Activated CD4-positive, alpha-beta T cell treated with anti-CD3 and anti-CD28 coated beads for 36 hours (primary cell): ENCODE measurements at regions of chr12 and their contacts with region 1.

Region 1: DNA sequence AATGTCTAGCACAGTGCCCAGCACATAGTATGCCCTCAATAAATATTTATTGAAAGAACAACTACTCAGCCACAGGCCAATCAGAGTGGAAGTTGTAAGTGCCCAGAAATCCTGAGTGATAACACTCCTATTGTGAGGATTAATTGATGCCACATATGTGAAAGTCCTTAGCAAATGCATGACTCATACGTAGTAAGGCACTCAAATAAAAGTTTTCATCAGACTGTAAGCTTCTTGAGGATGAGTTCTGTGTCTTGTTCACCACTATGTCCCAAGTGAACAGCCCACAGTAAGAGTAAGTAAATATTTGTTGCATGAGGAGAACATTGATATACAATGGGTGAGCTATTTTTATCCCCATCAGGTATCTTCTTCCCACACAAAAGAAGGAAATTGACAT is 24.7 kb upstream of the ANO6 start:
- DNase-seq: no peak
- ATAC-seq: peak; percentile 69
- H3K4me3 Mint-ChIP-seq: no peak overlapping the region
- H3K27ac Mint-ChIP-seq: no peak overlapping the region
- H3K4me1 Mint-ChIP-seq: peaks cover 16% of the 10 kb centered on the region
- H3K27me3 Mint-ChIP-seq: no peaks in the 10 kb centered on the region

Region 2: DNA sequence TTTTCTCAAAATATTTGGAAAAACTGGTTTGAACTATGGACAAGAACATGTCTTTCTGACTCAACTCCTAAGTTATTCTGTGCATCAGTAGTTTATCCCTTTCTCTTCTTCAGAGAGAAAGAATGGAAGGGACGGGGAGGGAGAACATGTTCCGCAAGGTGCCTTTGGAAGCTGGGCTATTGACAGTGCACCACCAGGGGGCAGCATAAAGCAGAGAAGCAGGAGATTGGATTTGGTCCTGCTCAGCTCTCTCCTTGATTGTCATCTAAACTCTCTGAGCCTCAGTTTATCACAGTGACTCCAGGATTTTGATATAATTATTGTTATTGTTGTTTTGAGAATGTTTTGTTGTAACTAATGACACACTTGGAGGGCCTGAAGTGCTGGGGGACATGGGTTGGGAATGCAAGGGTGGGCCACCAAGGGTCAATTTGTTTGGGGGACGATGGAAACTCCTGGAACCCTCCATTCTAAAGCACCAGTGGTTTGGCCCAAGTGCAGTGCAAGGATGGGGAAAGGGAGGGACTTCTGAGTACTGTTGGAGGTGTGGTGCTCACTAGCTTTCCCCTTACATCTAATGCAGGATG is 20.7 kb before region 1 on chr12:
- CTCF ChIA-PET with region 1: interaction called, 10 read pairs
- POLR2A ChIA-PET with region 1: no interaction called
- intact Hi-C with region 1: no loop called
- DNase-seq: peak; percentile 92
- ATAC-seq: no peak
- H3K4me3 Mint-ChIP-seq: no peak overlapping the region
- H3K27ac Mint-ChIP-seq: no peak overlapping the region
- H3K4me1 Mint-ChIP-seq: no peaks in the 10 kb centered on the region
- H3K27me3 Mint-ChIP-seq: no peaks in the 10 kb centered on the region

Region 3: GRCh38 chr12:45215419-45216229 is 24.4 kb after region 1 on chr12 and contains the start of gene ANO6:
- CTCF ChIA-PET with region 1: interaction called, 5 read pairs
- POLR2A ChIA-PET with region 1: no interaction called
- intact Hi-C with region 1: loop called in 1 of 2 experiments (anchors 1 kb)
- DNase-seq: peak; percentile 89
- ATAC-seq: peak; percentile 83
- H3K4me3 Mint-ChIP-seq: peak within 1 kb of the TSS; percentile 89
- H3K27ac Mint-ChIP-seq: peak within 1 kb of the TSS; percentile 90
- H3K4me1 Mint-ChIP-seq: peaks cover 39% of the 10 kb centered on the region
- H3K27me3 Mint-ChIP-seq: no peaks in the 10 kb centered on the region
- total RNA-seq, gene ANO6: 18.7 to 20.3 TPM

Region 4: GRCh38 chr12:46233423-46233822 is 1042.2 kb after region 1 on chr12:
- CTCF ChIA-PET with region 1: no interaction called
- POLR2A ChIA-PET with region 1: no interaction called
- intact Hi-C with region 1: no loop called
- DNase-seq: no peak
- ATAC-seq: no peak
- H3K4me3 Mint-ChIP-seq: no peak overlapping the region
- H3K27ac Mint-ChIP-seq: no peak overlapping the region
- H3K4me1 Mint-ChIP-seq: peaks cover 77% of the 10 kb centered on the region
- H3K27me3 Mint-ChIP-seq: no peaks in the 10 kb centered on the region